BJ (cell line): ENCODE measurements at regions of chr11 and their contacts with region 1.

Region 1: DNA sequence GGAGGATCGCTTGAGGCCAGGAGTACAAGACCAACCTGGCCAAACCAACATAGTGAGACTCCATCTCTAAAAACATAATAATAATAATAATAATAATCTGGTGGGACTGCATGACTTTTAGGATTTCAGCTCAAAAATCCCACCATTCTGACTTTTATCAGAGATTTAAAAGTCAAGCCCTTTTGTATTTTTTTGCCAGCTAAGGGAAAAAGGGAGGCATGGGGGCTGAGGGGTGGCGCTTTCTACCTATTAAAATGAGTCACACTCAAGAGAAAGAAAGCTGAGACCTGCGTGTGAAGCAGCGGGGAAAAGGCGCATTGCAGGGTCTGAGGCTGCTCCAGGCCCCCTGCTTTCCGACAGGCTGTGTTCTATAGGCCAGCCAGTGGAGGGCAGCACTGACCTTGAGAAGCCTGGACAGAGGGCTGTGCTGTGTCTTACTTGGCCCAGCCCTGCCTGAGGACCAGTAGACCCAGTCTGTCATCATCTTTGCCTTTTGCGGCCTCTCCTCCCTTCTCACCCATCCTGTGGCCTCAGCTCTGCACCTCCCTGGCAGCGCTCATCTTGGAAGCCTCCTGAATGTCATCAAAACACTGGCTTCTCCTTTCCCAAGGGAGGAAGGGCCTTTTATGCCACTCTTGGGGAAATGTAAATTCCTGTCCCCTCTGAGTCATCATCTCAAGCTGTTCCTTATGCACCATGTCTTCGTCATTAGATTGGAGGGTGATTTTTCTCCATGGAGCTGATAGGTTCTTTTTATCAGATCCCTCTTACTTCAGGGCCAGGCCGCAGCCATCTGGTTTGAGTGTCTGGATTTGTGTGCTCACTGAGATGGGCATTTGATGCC is 12.7 kb upstream of the MAPK8IP1 start:
- DNase-seq: peak; percentile 84
- H3K4me3 ChIP-seq: no peak overlapping the region
- H3K27me3 ChIP-seq: no peaks in the 10 kb centered on the region
- CTCF ChIP-seq: peak; percentile 84

Region 2: GRCh38 chr11:45859661-45860140 is 13.0 kb before region 1 on chr11:
- CTCF ChIA-PET with region 1: interaction called, 88 read pairs
- POLR2A ChIA-PET with region 1: no interaction called
- DNase-seq: peak; percentile 98
- H3K4me3 ChIP-seq: no peak overlapping the region
- H3K27me3 ChIP-seq: no peaks in the 10 kb centered on the region
- CTCF ChIP-seq: no peak

Region 3: GRCh38 chr11:45885274-45885920 is 12.7 kb after region 1 on chr11 and contains the start of gene MAPK8IP1:
- CTCF ChIA-PET with region 1: interaction called, 30 read pairs
- POLR2A ChIA-PET with region 1: no interaction called
- DNase-seq: no peak
- H3K4me3 ChIP-seq: peak within 1 kb of the TSS; percentile 37
- H3K27me3 ChIP-seq: peaks cover 3% of the 10 kb centered on the region; the same call in 1 of the 2 replicates
- CTCF ChIP-seq: no peak
- polyA plus RNA-seq, gene MAPK8IP1: 5.6 and 8.7 TPM in 2 replicates

Region 4: DNA sequence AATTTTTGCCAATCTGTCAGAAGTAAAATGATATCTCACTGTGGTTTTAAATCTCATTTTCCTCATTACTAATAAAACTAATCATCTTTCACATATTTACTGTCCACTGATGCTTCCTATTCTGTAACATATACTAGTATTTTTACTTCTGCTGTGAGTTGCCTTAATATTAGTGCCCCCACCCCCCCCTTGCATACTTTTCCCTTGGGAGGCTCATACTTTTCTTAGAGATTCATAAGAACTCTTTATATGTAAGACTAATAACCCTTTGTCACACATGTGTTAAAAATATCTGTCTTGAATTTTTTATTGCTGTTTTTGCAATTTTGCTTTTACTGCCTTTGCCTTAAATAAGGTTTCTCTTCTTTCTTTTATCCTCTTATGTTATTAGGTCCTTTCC is 161.3 kb after region 1 on chr11:
- CTCF ChIA-PET with region 1: no interaction called
- POLR2A ChIA-PET with region 1: no interaction called
- DNase-seq: no peak
- H3K4me3 ChIP-seq: no peak overlapping the region
- H3K27me3 ChIP-seq: no peaks in the 10 kb centered on the region
- CTCF ChIP-seq: no peak